ENCODE measurements at regions of chr1 and their contacts with region 1.

Region 1: GRCh38 chr1:206725109-206725963 is 40.6 kb downstream of the MAPKAPK2 start:
- DNase-seq: peak; percentile 80
- H3K4me3 Mint-ChIP-seq: no peak overlapping the region
- H3K27ac Mint-ChIP-seq: no peak overlapping the region
- H3K4me1 Mint-ChIP-seq: peaks cover 26% of the 10 kb centered on the region
- H3K27me3 Mint-ChIP-seq: no peaks in the 10 kb centered on the region

Region 2: GRCh38 chr1:206521143-206521542 is 204.2 kb before region 1 on chr1:
- CTCF ChIA-PET with region 1: no interaction called
- DNase-seq: no peak
- H3K4me3 Mint-ChIP-seq: no peak overlapping the region
- H3K27ac Mint-ChIP-seq: no peak overlapping the region
- H3K4me1 Mint-ChIP-seq: peaks cover 4% of the 10 kb centered on the region
- H3K27me3 Mint-ChIP-seq: peaks cover 39% of the 10 kb centered on the region

Region 3: DNA sequence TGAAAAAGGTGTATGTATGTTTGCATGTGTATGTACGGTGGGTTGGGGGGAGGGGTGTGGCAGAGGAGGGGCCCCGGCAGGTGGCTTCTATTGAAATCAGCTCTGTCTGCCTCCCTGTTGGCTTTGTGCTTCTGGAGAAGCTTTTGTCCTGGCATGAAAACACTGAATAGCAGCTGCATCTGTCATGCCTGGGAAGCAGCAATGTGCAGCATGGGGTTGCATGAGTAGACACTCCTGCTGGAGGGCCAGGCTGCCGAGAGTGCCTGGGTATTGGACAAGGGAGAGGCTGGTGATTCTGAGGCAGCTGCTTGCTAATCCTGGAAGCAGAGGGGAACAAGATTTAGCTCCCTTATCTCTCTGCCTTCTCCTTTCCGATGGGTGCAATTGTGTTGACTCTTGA is 20.1 kb before region 1 on chr1:
- CTCF ChIA-PET with region 1: interaction called, 15 read pairs
- DNase-seq: no peak
- H3K4me3 Mint-ChIP-seq: no peak overlapping the region
- H3K27ac Mint-ChIP-seq: no peak overlapping the region
- H3K4me1 Mint-ChIP-seq: peaks cover 68% of the 10 kb centered on the region
- H3K27me3 Mint-ChIP-seq: no peaks in the 10 kb centered on the region

Region 4: DNA sequence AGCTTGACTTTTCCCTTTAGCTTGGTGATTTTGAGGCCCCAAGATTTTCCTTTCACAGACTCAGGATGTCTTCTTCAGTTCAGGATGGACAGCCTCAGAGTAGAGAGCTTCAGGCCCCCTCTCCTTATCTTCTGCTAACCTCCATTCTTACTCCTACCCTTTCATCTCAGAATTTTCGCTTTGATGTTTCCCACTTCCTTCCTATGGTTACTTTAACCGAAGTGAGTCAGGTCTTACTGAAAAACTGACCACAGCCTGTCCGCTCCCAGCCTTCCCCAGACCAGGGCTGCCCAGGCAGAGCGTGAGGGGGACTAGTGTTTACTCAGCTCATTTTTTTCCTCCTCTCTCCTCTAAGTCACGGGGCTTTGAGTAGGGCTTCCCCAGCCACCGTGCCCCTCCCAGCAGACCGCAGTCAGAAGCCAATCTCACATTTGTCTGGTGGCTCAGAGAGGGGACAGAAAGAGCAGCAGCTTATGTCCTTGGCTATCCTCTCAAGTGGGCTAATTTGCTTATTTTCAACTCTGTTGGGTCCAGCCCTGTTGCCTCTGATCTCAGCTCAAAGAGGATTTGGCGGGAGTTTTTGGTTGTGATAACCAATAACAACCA is 41.0 kb after region 1 on chr1:
- CTCF ChIA-PET with region 1: interaction called, 12 read pairs
- DNase-seq: peak; percentile 79
- H3K4me3 Mint-ChIP-seq: peak overlapping the region; percentile 6
- H3K27ac Mint-ChIP-seq: peak overlapping the region; percentile 29
- H3K4me1 Mint-ChIP-seq: peaks cover 59% of the 10 kb centered on the region
- H3K27me3 Mint-ChIP-seq: peaks cover 66% of the 10 kb centered on the region

Region 5: GRCh38 chr1:206803221-206803730 is 77.9 kb after region 1 on chr1:
- CTCF ChIA-PET with region 1: interaction called, 361 read pairs
- DNase-seq: peak; percentile 89
- H3K4me3 Mint-ChIP-seq: no peak overlapping the region
- H3K27ac Mint-ChIP-seq: peak overlapping the region; percentile 86
- H3K4me1 Mint-ChIP-seq: peaks cover 62% of the 10 kb centered on the region
- H3K27me3 Mint-ChIP-seq: peaks cover 51% of the 10 kb centered on the region

Region 6: DNA sequence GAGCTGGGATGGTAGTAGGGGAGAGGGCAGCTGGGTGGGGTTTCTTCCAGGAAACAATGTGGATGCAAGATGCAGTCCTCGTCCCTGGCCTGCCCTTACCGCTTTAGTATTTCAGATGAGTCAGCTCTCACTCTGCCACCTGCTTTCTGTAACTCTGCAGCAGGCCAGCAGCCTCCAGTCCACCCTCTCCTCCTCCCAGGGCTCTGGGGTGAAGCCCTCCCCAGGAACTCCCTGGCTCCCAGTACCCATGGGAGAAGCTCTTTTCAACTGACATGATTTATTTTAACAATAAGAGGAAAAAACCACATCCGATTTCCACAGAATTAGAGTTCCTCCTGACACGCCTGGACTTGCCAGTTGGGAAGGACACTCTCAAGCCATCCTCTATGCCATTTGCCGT is 101.1 kb after region 1 on chr1:
- CTCF ChIA-PET with region 1: no interaction called
- DNase-seq: no peak
- H3K4me3 Mint-ChIP-seq: no peak overlapping the region
- H3K27ac Mint-ChIP-seq: no peak overlapping the region
- H3K4me1 Mint-ChIP-seq: peaks cover 47% of the 10 kb centered on the region
- H3K27me3 Mint-ChIP-seq: peaks cover 21% of the 10 kb centered on the region

Region 7: GRCh38 chr1:206905280-206906164 is 180.2 kb after region 1 on chr1:
- CTCF ChIA-PET with region 1: interaction called, 24 read pairs
- DNase-seq: no peak
- H3K4me3 Mint-ChIP-seq: peak overlapping the region; percentile 46
- H3K27ac Mint-ChIP-seq: peak overlapping the region; percentile 77
- H3K4me1 Mint-ChIP-seq: peaks cover 60% of the 10 kb centered on the region
- H3K27me3 Mint-ChIP-seq: no peaks in the 10 kb centered on the region

Region 8: GRCh38 chr1:206935491-206936067 is 210.2 kb after region 1 on chr1:
- CTCF ChIA-PET with region 1: interaction called, 14 read pairs
- DNase-seq: peak; percentile 74
- H3K4me3 Mint-ChIP-seq: no peak overlapping the region
- H3K27ac Mint-ChIP-seq: no peak overlapping the region
- H3K4me1 Mint-ChIP-seq: peaks cover 14% of the 10 kb centered on the region
- H3K27me3 Mint-ChIP-seq: peaks cover 35% of the 10 kb centered on the region

Measured in activated naive CD4-positive, alpha-beta T cell treated with anti-CD3 and anti-CD28 coated beads, Interleukin-2, amount 10 ng/mL, durations not matched to agents 7 days and 5 days (primary cell).